H1 (cell line): ENCODE measurements at regions of chr12 and their contacts with region 1.

Region 1: DNA sequence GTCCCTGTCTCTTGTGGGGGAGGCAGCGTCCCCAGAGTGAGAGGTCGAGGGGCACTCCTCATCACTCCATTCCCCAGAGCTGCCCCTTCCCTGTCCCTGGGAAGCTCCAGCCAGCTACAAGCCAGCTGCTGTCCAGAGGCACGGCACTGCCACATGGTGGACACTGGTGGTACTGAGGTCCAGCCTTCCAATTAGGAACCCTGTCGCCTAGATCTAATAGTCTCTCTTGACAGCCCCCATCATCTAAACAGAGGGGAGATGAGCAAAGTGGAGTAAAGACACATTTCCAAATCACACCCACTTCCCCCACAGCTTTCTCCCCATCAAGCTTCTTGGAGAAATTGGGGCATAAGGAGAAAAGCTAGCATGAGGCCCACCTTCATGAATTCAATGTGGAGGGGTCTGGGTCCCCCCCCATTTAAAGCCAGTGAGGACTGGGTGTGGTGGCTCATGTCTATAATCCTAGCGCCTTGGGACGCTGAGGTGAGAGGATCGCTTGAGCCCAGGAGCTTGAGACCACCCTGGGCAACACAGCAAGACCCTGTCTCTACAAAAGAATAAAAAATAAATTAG is 2.1 kb upstream of the INHBE start:
- DNase-seq: peak in 1 of 2 experiments; percentile 94
- H3K4me3 ChIP-seq: no peak overlapping the region
- H3K27ac ChIP-seq: no peak overlapping the region
- H3K4me1 ChIP-seq: peaks cover 0 to 28% (median 19%) of the 10 kb centered on the region in 4 experiments; a peak in 6 of 7 replicates
- H3K27me3 ChIP-seq: no peaks in the 10 kb centered on the region
- CTCF ChIP-seq: peak in 2 of 3 experiments; percentile 97 to 99; a peak in 3 of 4 replicates
- EP300 ChIP-seq: no peak
- POLR2A ChIP-seq: no peak
- RAD21 ChIP-seq: peak; percentile 98 to 99

Region 2: DNA sequence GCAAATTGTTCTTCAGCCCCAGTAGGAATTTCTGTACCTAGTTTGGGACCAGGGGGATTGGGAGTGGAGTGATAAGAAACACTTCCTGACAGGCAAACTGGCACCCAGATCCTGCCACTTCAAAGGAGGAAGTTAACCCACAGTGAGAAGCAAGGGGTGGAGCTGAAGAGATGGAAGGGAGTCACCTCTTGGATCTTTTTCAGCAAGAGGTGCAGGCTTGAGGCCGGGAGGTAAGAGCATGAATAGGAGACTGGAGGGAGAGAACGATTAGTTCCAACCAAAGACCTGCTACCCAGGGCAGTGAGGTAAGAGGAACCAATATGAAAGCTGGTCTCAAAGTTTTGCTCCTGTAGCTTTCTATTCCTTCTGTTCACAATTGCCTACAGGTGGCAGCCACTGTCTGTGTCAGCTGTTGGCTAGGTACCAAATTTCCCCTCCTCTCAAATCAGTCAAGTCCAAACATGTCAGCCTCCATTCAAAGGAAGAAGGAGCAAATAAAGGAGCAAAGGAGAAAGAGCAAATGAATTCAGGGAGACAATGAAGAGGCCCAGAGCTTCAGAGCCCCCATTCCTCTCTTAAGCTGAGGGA is 421.8 kb before region 1 on chr12:
- CTCF ChIA-PET with region 1: no interaction called
- POLR2A ChIA-PET with region 1: no interaction called
- DNase-seq: no peak
- H3K4me3 ChIP-seq: no peak overlapping the region
- H3K27ac ChIP-seq: no peak overlapping the region
- H3K4me1 ChIP-seq: peaks cover 0 to 8% (median 3%) of the 10 kb centered on the region in 4 experiments; a peak in 5 of 7 replicates
- H3K27me3 ChIP-seq: peaks cover 0 to 3% (median 0%) of the 10 kb centered on the region in 4 experiments; a peak in 1 of 7 replicates
- CTCF ChIP-seq: peak in 2 of 3 experiments; percentile 12 to 46; a peak in 3 of 4 replicates
- EP300 ChIP-seq: no peak
- POLR2A ChIP-seq: no peak
- RAD21 ChIP-seq: peak; percentile 42 to 58

Region 3: DNA sequence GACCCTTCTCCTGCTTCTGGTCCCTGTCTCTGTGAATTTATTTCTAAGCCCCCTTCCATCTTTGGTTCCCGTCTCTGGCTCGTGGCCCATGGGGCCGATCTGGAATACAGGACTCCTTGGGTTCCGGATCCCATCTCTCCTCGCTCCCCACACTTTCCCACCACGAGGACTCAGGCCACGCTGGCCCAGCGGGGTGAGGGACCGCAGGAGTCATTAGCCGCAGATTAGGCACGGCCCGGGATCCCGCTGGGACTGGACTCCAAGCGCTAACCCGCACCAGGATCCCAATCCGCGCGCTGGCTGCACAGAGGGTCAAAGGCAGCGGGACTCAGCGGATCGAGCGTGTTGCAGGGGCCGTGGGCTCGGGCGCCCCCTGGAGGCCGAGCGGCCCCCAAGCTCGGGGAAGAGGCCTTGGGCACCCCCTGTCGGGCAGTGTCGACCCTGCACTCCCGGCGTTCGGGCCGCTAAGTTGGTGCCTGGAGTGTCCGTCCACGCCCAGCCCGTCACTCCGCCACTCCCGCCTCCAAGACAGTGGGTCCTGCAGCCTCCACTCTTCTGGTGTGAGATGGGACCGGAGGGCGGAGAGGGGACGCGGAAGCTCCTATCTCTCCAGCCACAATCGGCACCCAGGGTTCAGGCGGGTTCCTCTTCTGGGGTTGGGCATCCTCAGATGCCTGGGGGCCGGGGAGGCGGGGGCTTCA is 214.0 kb before region 1 on chr12:
- CTCF ChIA-PET with region 1: interaction called, 225 read pairs
- POLR2A ChIA-PET with region 1: interaction called, 51 read pairs
- DNase-seq: peak in 1 of 2 experiments; percentile 98
- H3K4me3 ChIP-seq: peak overlapping the region; percentile 42 to 67 (median 54)
- H3K27ac ChIP-seq: no peak overlapping the region
- H3K4me1 ChIP-seq: peaks cover 6 to 68% (median 45%) of the 10 kb centered on the region in 4 experiments
- H3K27me3 ChIP-seq: peaks cover 59 to 80% (median 74%) of the 10 kb centered on the region in 4 experiments
- CTCF ChIP-seq: peak in 2 of 3 experiments; percentile 100; a peak in 3 of 4 replicates
- EP300 ChIP-seq: peak in 1 of 2 experiments; percentile 59; a peak in 1 of 3 replicates
- POLR2A ChIP-seq: peak in 1 of 2 experiments; percentile 24; a peak in 1 of 3 replicates
- RAD21 ChIP-seq: peak; percentile 85 to 91

Region 4: GRCh38 chr12:57272337-57273151 is 180.5 kb before region 1 on chr12:
- CTCF ChIA-PET with region 1: interaction called, 37 read pairs
- POLR2A ChIA-PET with region 1: interaction called, 12 read pairs
- DNase-seq: no peak
- H3K4me3 ChIP-seq: no peak overlapping the region
- H3K27ac ChIP-seq: no peak overlapping the region
- H3K4me1 ChIP-seq: no peaks in the 10 kb centered on the region; a peak in 1 of 7 replicates
- H3K27me3 ChIP-seq: no peaks in the 10 kb centered on the region
- CTCF ChIP-seq: no peak
- EP300 ChIP-seq: no peak
- POLR2A ChIP-seq: no peak
- RAD21 ChIP-seq: no peak

Region 5: GRCh38 chr12:57309420-57309819 is 143.6 kb before region 1 on chr12:
- CTCF ChIA-PET with region 1: interaction called, 478 read pairs
- POLR2A ChIA-PET with region 1: interaction called, 17 read pairs
- DNase-seq: no peak
- H3K4me3 ChIP-seq: no peak overlapping the region
- H3K27ac ChIP-seq: no peak overlapping the region
- H3K4me1 ChIP-seq: no peaks in the 10 kb centered on the region
- H3K27me3 ChIP-seq: no peaks in the 10 kb centered on the region
- CTCF ChIP-seq: no peak
- EP300 ChIP-seq: no peak
- POLR2A ChIP-seq: no peak
- RAD21 ChIP-seq: no peak

Region 6: GRCh38 chr12:57368349-57369095 is 84.5 kb before region 1 on chr12:
- CTCF ChIA-PET with region 1: interaction called, 11 read pairs
- POLR2A ChIA-PET with region 1: interaction called, 6 read pairs
- DNase-seq: no peak
- H3K4me3 ChIP-seq: no peak overlapping the region
- H3K27ac ChIP-seq: no peak overlapping the region
- H3K4me1 ChIP-seq: no peaks in the 10 kb centered on the region
- H3K27me3 ChIP-seq: no peaks in the 10 kb centered on the region
- CTCF ChIP-seq: peak in 1 of 3 experiments; percentile 32; a peak in 1 of 4 replicates
- EP300 ChIP-seq: no peak
- POLR2A ChIP-seq: no peak
- RAD21 ChIP-seq: peak in 1 of 2 experiments; percentile 36; a peak in 2 of 4 replicates

Region 7: GRCh38 chr12:57410534-57410933 is 42.5 kb before region 1 on chr12:
- CTCF ChIA-PET with region 1: interaction called, 18 read pairs
- POLR2A ChIA-PET with region 1: interaction called, 4 read pairs
- DNase-seq: no peak
- H3K4me3 ChIP-seq: no peak overlapping the region
- H3K27ac ChIP-seq: no peak overlapping the region
- H3K4me1 ChIP-seq: no peaks in the 10 kb centered on the region; a peak in 1 of 7 replicates
- H3K27me3 ChIP-seq: no peaks in the 10 kb centered on the region
- CTCF ChIP-seq: no peak
- EP300 ChIP-seq: no peak
- POLR2A ChIP-seq: no peak
- RAD21 ChIP-seq: no peak

Region 8: GRCh38 chr12:57441846-57442427 is 11.1 kb before region 1 on chr12:
- CTCF ChIA-PET with region 1: interaction called, 112 read pairs
- POLR2A ChIA-PET with region 1: interaction called, 168 read pairs
- DNase-seq: no peak
- H3K4me3 ChIP-seq: no peak overlapping the region
- H3K27ac ChIP-seq: no peak overlapping the region
- H3K4me1 ChIP-seq: no peaks in the 10 kb centered on the region
- H3K27me3 ChIP-seq: no peaks in the 10 kb centered on the region
- CTCF ChIP-seq: no peak
- EP300 ChIP-seq: no peak
- POLR2A ChIP-seq: no peak
- RAD21 ChIP-seq: no peak

Region 9: DNA sequence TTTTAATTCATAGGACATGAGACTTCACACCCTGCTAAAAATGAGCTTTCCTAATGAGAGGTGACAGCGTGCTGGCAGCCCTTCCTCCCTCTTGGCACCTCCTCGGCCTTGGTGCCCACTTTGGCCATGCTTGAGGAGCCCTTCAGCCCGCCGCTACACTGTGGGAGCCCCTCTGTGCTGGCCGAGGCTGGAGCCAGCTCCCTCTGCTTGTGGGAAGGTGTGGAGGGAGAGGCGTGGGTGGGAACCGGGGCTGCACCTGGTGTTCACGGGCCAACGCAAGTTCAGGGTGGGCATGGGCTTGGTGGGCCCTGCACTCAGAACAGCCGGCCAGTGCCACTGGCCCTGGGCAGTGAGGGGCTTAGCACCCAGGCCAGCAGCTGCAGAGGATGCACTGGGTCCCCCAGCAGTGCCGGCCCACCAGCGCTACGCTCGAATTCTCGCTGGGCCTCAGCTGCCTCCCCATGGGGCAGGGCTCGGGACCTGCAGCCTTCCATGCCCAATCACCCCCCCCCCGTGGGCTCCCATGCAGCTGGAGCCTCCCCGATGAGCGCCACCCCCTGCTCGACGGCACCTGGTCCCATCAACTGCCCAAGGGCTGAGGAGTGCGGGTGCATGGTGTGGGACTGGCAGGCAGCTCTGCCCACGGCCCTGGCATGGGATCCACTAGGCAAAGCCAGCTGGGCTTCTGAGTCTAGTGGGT is 202.7 kb after region 1 on chr12:
- CTCF ChIA-PET with region 1: no interaction called
- POLR2A ChIA-PET with region 1: no interaction called
- DNase-seq: no peak
- H3K4me3 ChIP-seq: no peak overlapping the region
- H3K27ac ChIP-seq: no peak overlapping the region
- H3K4me1 ChIP-seq: no peaks in the 10 kb centered on the region
- H3K27me3 ChIP-seq: no peaks in the 10 kb centered on the region
- CTCF ChIP-seq: no peak
- EP300 ChIP-seq: no peak
- POLR2A ChIP-seq: no peak
- RAD21 ChIP-seq: no peak